Common myeloid progenitor, CD34-positive (primary cell): ENCODE measurements at regions of chr5 and their contacts with region 1.

Region 1: GRCh38 chr5:34486160-34486848 is 169.8 kb upstream of the RAI14 start:
- DNase-seq: peak; percentile 68 to 84 (median 76)
- H3K4me3 ChIP-seq: no peak overlapping the region
- H3K27ac ChIP-seq: no peak overlapping the region
- H3K4me1 ChIP-seq: no peaks in the 10 kb centered on the region
- H3K27me3 ChIP-seq: peaks cover 0 to 7% (median 2%) of the 10 kb centered on the region in 5 experiments

Region 2: GRCh38 chr5:34474573-34475021 is 11.7 kb before region 1 on chr5:
- CTCF ChIA-PET with region 1: interaction called, 17 read pairs
- POLR2A ChIA-PET with region 1: no interaction called
- DNase-seq: peak; percentile 34 to 59 (median 45)
- H3K4me3 ChIP-seq: no peak overlapping the region
- H3K27ac ChIP-seq: no peak overlapping the region
- H3K4me1 ChIP-seq: peaks cover 0 to 6% (median 1%) of the 10 kb centered on the region in 4 experiments
- H3K27me3 ChIP-seq: peaks cover 0 to 2% (median 0%) of the 10 kb centered on the region in 5 experiments

Region 3: GRCh38 chr5:34533582-34534522 is 47.5 kb after region 1 on chr5:
- CTCF ChIA-PET with region 1: interaction called, 10 read pairs
- POLR2A ChIA-PET with region 1: no interaction called
- DNase-seq: no peak
- H3K4me3 ChIP-seq: no peak overlapping the region
- H3K27ac ChIP-seq: no peak overlapping the region
- H3K4me1 ChIP-seq: no peaks in the 10 kb centered on the region
- H3K27me3 ChIP-seq: peaks cover 0 to 3% (median 0%) of the 10 kb centered on the region in 5 experiments

Region 4: DNA sequence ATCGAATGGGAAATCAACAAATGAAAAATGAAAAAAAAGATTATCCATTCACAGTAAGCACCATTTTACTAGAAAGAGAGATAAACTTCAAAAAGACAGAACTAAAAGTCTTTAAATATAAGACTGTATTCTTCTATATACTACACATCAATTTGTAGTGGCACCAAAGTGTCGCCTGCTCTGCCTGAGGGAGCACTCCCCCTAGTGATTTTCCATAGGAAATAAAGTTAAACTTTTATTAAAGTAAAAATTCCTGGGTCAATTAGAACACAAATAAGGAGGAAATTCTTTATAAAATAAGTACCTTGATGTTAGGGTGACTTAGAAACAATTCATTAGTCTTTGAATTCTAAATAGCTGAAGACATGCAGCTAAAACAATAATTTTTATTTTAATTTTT is 419.3 kb after region 1 on chr5:
- CTCF ChIA-PET with region 1: interaction called, 23 read pairs
- POLR2A ChIA-PET with region 1: no interaction called
- DNase-seq: peak in 2 of 3 donors; percentile 7 to 15
- H3K4me3 ChIP-seq: no peak overlapping the region
- H3K27ac ChIP-seq: no peak overlapping the region
- H3K4me1 ChIP-seq: peaks cover 0 to 7% (median 2%) of the 10 kb centered on the region in 4 experiments
- H3K27me3 ChIP-seq: no peaks in the 10 kb centered on the region